ENCODE measurements at regions of chr4 and their contacts with region 1.

Region 1: GRCh38 chr4:104591510-104591911 is 96.8 kb upstream of the CXXC4 start:
- DNase-seq: no peak
- ATAC-seq: no peak
- H3K4me3 ChIP-seq: no peak overlapping the region
- H3K27ac ChIP-seq: no peak overlapping the region
- H3K4me1 ChIP-seq: no peaks in the 10 kb centered on the region
- H3K27me3 ChIP-seq: no peaks in the 10 kb centered on the region
- CTCF ChIP-seq: no peak

Region 2: DNA sequence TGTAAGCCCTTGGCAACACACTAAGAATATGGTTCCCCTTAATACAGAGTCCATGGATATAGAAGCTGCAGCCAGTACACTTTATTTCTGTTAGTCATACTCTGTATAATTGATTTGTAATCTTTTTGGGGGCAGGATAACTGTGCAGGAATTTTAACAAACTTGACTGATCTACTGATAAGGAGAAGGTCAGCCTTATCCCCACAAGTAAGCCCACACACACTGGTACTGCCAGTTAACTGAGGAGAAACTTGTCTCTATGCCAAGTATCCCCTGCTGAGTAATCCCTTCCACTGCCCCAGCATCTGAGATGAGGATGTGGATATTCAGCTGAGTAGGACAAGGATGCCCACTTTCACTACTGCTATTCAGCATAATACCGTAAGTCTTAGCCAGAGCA is 58.1 kb after region 1 on chr4:
- intact Hi-C with region 1: loop called in 1 of 2 experiments (anchors 10 kb)
- DNase-seq: no peak
- ATAC-seq: no peak
- H3K4me3 ChIP-seq: no peak overlapping the region
- H3K27ac ChIP-seq: no peak overlapping the region
- H3K4me1 ChIP-seq: no peaks in the 10 kb centered on the region
- H3K27me3 ChIP-seq: no peaks in the 10 kb centered on the region
- CTCF ChIP-seq: no peak

Measured in psoas muscle (tissue), 8 donors.